ENCODE measurements at regions of chr2 and their contacts with region 1.

Region 1: DNA sequence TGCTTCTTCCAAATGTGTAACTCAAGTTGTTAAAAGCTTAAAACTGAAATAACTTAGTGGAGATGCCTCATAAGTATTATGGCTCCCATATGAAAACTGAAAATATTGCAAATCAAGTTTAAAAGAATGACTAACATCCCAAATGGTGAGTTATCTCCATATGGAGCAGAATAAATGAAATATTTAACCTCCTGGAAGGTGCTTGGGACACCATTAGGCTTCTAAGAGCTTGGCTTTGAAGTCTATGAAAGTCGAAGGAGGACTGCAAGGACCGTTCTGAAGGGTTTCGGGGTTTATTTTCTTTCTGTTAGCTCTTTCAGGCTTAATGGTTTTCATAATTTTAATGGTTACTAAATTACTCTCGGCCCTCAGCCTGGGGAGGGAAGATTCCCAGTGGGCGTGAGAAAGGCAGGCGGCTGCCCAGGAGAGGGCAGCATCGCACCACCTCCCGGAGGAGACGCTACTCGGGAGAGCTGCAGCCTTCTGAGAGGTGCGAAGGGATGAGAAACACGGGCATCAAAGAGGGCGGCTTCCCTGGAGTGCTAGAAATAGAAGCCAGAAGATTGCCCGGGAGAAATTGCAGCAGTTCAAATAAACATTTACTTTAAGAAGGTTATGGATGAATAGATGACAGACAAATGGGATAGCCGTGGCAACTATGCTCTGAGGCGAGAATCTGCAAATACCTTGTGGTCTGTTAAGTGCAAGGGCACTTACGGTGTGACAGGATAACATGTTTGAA is 43.1 kb downstream of the MAP3K19 start:
- DNase-seq: peak; percentile 38 to 84 (median 71)
- ATAC-seq: peak; percentile 90
- H3K4me3 ChIP-seq: no peak overlapping the region
- H3K4me3 Mint-ChIP-seq: no peak overlapping the region
- H3K27ac ChIP-seq: no peak overlapping the region
- H3K27ac Mint-ChIP-seq: no peak overlapping the region
- H3K4me1 ChIP-seq: peaks cover 4% of the 10 kb centered on the region
- H3K4me1 Mint-ChIP-seq: peaks cover 5% of the 10 kb centered on the region
- H3K27me3 ChIP-seq: no peaks in the 10 kb centered on the region
- H3K27me3 Mint-ChIP-seq: peaks cover 6% of the 10 kb centered on the region
- CTCF ChIP-seq: peak; percentile 90

Region 2: DNA sequence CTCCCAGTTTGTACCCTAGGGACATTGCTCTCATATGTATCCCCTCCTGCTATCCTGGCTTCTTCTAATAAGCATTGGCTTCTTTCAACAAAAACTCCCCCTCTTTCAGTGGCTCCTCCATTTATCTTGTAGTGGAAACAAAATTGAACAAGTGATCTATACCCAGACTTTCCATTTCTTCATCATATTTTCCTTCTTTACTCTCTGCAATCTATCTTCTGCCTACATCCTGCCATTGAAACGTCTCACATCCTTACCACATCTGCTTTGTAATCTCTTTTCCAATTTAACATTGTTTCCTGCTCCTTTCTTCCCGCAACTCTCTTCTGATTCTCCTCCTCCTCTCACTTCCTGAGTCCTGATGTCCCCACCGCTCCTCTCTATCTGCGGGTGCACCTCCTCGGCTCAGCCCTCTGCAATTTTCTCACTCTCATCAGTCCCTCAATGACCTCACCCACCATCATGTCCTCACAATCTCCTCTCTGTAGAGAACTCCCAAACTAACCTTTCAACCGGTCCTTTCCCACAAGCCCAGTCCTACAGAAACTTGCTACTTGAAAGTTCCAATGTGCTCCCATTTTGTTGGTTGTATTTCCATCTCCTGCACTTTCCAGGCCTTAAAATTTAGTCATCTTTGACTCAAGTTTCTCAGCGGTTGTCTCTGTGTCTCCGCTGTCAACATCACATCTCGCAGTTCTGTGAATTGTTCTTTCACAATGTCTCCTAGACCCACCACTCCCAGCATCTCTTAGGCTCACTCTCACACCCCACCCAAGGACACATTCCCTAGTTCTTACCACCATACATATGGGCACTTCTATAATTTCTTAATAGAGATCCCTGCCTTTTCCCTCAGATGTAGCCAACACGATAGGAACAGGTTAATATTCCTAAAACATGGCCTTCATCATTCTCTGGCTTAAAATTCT is 19.0 kb after region 1 on chr2:
- CTCF ChIA-PET with region 1: interaction called, 15 read pairs
- POLR2A ChIA-PET with region 1: no interaction called
- intact Hi-C with region 1: no loop called
- DNase-seq: no peak
- ATAC-seq: no peak
- H3K4me3 ChIP-seq: no peak overlapping the region
- H3K4me3 Mint-ChIP-seq: no peak overlapping the region
- H3K27ac ChIP-seq: no peak overlapping the region
- H3K27ac Mint-ChIP-seq: no peak overlapping the region
- H3K4me1 ChIP-seq: no peaks in the 10 kb centered on the region
- H3K4me1 Mint-ChIP-seq: no peaks in the 10 kb centered on the region
- H3K27me3 ChIP-seq: no peaks in the 10 kb centered on the region
- H3K27me3 Mint-ChIP-seq: no peaks in the 10 kb centered on the region
- CTCF ChIP-seq: no peak

Region 3: DNA sequence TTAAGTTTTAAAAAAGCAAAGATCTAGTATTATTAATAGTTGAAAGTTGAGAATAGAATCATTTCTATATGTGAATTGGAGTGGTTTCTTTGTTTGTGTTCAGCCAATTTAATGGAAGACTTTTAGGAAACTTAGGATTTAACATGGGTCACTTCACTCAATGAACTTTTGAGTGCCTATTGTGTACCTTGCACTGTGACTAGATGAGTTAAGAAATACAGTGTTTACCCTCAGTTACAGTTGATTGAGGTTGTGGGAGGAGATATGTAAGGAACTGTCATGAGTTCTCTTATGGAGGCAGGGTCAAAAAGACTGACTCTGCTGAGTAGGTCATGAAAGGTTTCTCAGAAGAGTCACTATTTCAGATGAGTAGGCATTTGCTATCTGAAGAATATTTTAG is 146.5 kb after region 1 on chr2:
- CTCF ChIA-PET with region 1: interaction called, 4 read pairs
- POLR2A ChIA-PET with region 1: no interaction called
- intact Hi-C with region 1: loop called (anchors 5 to 10 kb)
- DNase-seq: no peak
- ATAC-seq: no peak
- H3K4me3 ChIP-seq: no peak overlapping the region
- H3K4me3 Mint-ChIP-seq: no peak overlapping the region
- H3K27ac ChIP-seq: no peak overlapping the region
- H3K27ac Mint-ChIP-seq: no peak overlapping the region
- H3K4me1 ChIP-seq: no peaks in the 10 kb centered on the region
- H3K4me1 Mint-ChIP-seq: peaks cover 5% of the 10 kb centered on the region
- H3K27me3 ChIP-seq: no peaks in the 10 kb centered on the region
- H3K27me3 Mint-ChIP-seq: no peaks in the 10 kb centered on the region
- CTCF ChIP-seq: no peak

Region 4: DNA sequence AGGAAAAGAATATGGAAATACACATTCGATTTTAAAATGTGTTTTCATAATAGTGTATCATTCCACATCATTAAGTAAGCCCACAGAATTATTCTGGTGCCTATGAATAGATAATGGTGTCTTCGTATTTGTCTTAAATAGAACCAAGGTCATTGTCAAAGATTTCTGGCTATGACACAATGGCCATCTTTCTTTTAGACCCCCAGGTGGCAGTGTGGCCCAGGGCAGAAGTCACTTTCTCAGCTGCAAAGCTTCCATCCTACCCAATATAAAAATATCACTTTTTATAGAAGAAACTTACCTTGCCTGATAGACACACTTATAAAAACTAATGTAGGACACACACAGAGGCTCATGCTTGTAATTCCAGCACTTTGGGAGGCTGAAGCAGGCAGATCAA is 469.4 kb after region 1 on chr2:
- CTCF ChIA-PET with region 1: interaction called, 11 read pairs
- POLR2A ChIA-PET with region 1: no interaction called
- intact Hi-C with region 1: loop called (anchors 2 to 5 kb)
- DNase-seq: peak in 6 of 9 experiments; percentile 4 to 57 (median 32)
- ATAC-seq: peak; percentile 38
- H3K4me3 ChIP-seq: no peak overlapping the region
- H3K4me3 Mint-ChIP-seq: no peak overlapping the region
- H3K27ac ChIP-seq: no peak overlapping the region
- H3K27ac Mint-ChIP-seq: no peak overlapping the region
- H3K4me1 ChIP-seq: no peaks in the 10 kb centered on the region
- H3K4me1 Mint-ChIP-seq: no peaks in the 10 kb centered on the region
- H3K27me3 ChIP-seq: no peaks in the 10 kb centered on the region
- H3K27me3 Mint-ChIP-seq: no peaks in the 10 kb centered on the region
- CTCF ChIP-seq: peak; percentile 15

Region 5: GRCh38 chr2:135600915-135601314 is 596.7 kb after region 1 on chr2:
- CTCF ChIA-PET with region 1: interaction called, 30 read pairs
- POLR2A ChIA-PET with region 1: no interaction called
- intact Hi-C with region 1: loop called (anchors 1 kb)
- DNase-seq: peak in 2 of 9 experiments; percentile 18 to 37
- ATAC-seq: no peak
- H3K4me3 ChIP-seq: no peak overlapping the region
- H3K4me3 Mint-ChIP-seq: no peak overlapping the region
- H3K27ac ChIP-seq: no peak overlapping the region
- H3K27ac Mint-ChIP-seq: no peak overlapping the region
- H3K4me1 ChIP-seq: no peaks in the 10 kb centered on the region
- H3K4me1 Mint-ChIP-seq: peaks cover 11% of the 10 kb centered on the region
- H3K27me3 ChIP-seq: no peaks in the 10 kb centered on the region
- H3K27me3 Mint-ChIP-seq: no peaks in the 10 kb centered on the region
- CTCF ChIP-seq: peak; percentile 46

Region 6: GRCh38 chr2:135797497-135798274 is 793.5 kb after region 1 on chr2:
- CTCF ChIA-PET with region 1: interaction called, 15 read pairs
- POLR2A ChIA-PET with region 1: no interaction called
- intact Hi-C with region 1: loop called (anchors 1 to 5 kb)
- DNase-seq: peak; percentile 54 to 85 (median 79)
- ATAC-seq: peak; percentile 95
- H3K4me3 ChIP-seq: no peak overlapping the region
- H3K4me3 Mint-ChIP-seq: no peak overlapping the region
- H3K27ac ChIP-seq: no peak overlapping the region
- H3K27ac Mint-ChIP-seq: no peak overlapping the region
- H3K4me1 ChIP-seq: peaks cover 2% of the 10 kb centered on the region
- H3K4me1 Mint-ChIP-seq: peaks cover 13% of the 10 kb centered on the region
- H3K27me3 ChIP-seq: no peaks in the 10 kb centered on the region
- H3K27me3 Mint-ChIP-seq: no peaks in the 10 kb centered on the region
- CTCF ChIP-seq: peak; percentile 92

Measured in CD8-positive, alpha-beta T cell (primary cell).